ENCODE measurements at regions of chr5 and their contacts with region 1.

Region 1: GRCh38 chr5:671459-672328 is 21.5 kb downstream of the TPPP start:
- DNase-seq: peak; percentile 59 to 92 (median 76)
- ATAC-seq: peak; percentile 81 to 92 (median 89)
- H3K4me3 ChIP-seq: peak overlapping the region in 1 of 4 donors; percentile 4
- H3K27ac ChIP-seq: no peak overlapping the region
- H3K4me1 ChIP-seq: peaks cover 7 to 16% (median 11%) of the 10 kb centered on the region in 3 donors
- H3K27me3 ChIP-seq: no peaks in the 10 kb centered on the region
- CTCF ChIP-seq: peak; percentile 86 to 90 (median 88)

Region 2: GRCh38 chr5:902129-902916 is 230.6 kb after region 1 on chr5:
- intact Hi-C with region 1: loop called in 2 of 3 experiments (anchors 5 kb)
- DNase-seq: peak in 2 of 6 donors; percentile 6 to 14
- ATAC-seq: no peak
- H3K4me3 ChIP-seq: no peak overlapping the region
- H3K27ac ChIP-seq: no peak overlapping the region
- H3K4me1 ChIP-seq: no peaks in the 10 kb centered on the region
- H3K27me3 ChIP-seq: no peaks in the 10 kb centered on the region
- CTCF ChIP-seq: no peak

Region 3: GRCh38 chr5:912280-913091 is 240.8 kb after region 1 on chr5:
- intact Hi-C with region 1: no loop called
- DNase-seq: no peak
- ATAC-seq: peak in 1 of 4 donors; percentile 43
- H3K4me3 ChIP-seq: no peak overlapping the region
- H3K27ac ChIP-seq: no peak overlapping the region
- H3K4me1 ChIP-seq: peaks cover 11 to 15% (median 11%) of the 10 kb centered on the region in 3 donors
- H3K27me3 ChIP-seq: no peaks in the 10 kb centered on the region
- CTCF ChIP-seq: no peak